GM10248 (cell line): ENCODE measurements at regions of chr2 and their contacts with region 1.

Region 1: GRCh38 chr2:47767880-47768609 is 14.9 kb upstream of the MSH6 start:
- DNase-seq: peak; percentile 79
- CTCF ChIP-seq: peak; percentile 98

Region 2: DNA sequence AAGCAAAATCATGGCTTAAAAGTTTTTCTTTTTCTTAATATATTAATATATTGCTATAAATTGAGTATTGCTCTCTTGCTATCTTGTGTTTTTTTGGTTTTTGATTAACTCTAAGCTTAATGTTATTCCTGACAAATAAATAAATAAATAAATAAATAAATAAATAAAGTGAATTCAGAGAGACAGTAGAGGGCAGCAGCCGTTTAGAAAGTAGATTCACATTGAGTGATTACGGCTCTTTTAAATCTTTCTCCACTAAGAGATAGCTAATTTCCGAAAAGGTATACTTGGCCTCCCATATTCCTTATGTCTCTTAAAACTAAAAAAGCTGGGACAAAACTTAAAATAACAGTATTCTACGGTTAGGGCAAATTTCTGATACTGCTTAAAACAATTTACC is 330.8 kb before region 1 on chr2:
- CTCF ChIA-PET with region 1: interaction called, 70 read pairs
- POLR2A ChIA-PET with region 1: no interaction called
- DNase-seq: peak; percentile 26
- CTCF ChIP-seq: peak; percentile 23

Region 3: DNA sequence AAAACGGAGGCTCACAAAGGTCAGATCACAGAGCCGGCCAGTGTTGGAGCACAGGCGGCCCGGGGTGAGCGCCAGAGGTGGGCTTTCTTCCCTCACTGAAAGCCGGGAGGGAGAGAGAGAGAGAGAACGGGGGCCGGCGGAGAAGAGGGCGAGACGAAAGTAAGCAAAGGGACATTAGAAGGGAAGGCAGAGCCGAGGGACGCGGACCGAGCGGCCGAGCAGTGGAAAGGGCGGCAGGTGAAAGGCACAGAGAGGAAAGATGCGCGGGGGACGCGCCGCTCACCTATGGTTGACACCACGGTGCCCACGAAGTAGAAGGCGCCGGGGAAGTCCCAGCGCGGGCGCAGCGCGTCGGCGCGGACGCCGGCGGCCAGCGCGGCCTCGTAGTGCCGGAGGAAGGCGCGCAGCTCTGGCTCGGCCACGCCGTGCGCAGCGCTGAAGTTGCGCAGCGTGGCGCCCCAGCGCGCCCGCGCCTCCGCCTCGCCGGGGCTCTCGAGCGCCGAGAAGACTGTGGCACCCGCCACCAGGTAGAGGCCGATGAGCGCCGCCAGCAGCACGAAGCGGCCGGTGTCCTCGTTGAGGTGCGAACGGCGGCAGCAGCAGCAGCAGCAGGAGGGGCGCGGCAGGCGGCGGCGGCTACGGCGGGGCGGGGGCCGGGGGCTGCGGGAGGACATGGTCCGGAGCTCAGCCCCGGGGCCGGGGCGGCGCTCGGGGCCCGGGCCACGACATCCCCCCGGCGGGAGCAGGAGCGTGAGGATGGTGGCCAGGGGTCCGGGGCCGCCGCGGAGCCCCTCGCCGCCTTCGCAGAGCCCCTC is 198.2 kb before region 1 on chr2:
- CTCF ChIA-PET with region 1: no interaction called
- POLR2A ChIA-PET with region 1: no interaction called
- DNase-seq: peak; percentile 29
- CTCF ChIP-seq: no peak

Region 4: GRCh38 chr2:47653902-47654789 is 113.9 kb before region 1 on chr2:
- CTCF ChIA-PET with region 1: interaction called, 16 read pairs
- POLR2A ChIA-PET with region 1: no interaction called
- DNase-seq: no peak
- CTCF ChIP-seq: peak; percentile 34

Region 5: DNA sequence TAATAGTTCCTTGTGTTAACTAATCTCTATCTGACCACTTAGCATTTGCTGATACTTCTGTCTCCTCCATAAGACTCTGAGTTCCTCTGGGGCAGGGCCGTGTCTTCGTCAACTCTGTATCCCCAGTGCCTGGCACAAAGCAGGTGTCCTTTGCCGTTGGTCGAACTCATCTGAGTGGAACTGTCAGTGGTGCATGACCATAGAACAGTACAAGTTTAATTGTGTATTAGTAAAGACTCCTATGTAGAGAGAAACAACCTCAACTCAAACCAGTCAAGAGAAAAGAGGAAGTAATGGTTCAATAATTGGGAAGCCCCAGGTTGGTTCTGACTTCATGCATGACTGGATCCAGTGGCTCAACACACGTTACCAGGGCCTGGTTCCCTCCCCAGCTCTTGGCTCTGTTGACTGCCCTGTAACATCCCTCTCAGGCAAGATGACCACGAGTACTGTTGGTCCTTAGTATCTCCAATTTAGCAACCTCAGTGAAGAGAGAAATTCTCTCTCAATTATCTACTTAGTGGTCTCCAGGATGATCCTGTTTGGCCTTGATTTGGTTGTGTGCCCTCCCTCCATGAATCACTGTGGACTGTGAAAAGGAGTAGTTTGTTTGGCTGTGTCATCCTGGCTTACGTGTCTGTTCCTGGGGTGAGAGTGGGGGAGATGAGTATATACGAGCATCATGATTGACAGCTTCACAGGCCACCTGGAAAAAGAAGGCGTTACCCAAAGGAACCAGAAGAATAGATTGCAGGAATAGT is 43.6 kb before region 1 on chr2:
- CTCF ChIA-PET with region 1: interaction called, 16 read pairs
- POLR2A ChIA-PET with region 1: no interaction called
- DNase-seq: peak; percentile 78
- CTCF ChIP-seq: no peak

Region 6: DNA sequence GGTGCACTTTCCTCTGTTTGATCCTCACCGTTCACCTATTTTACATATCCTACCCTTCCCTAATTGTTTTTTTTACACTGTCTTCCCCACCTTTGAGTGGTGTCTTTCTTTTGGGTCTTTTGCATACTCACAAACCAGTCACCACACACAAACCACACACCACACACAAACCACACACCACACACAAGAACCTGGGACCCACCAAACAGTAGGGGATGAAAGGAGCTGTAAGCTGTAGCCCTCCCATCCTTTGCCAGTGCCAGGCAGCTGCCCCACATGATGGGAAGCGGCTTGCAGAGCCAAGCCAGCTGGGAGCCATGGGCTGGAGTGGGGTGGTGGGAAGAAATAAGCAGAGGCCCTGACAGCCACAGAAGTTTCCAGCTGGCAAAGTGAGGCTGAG is 24.0 kb before region 1 on chr2:
- CTCF ChIA-PET with region 1: interaction called, 16 read pairs
- POLR2A ChIA-PET with region 1: no interaction called
- DNase-seq: no peak
- CTCF ChIP-seq: no peak

Region 7: DNA sequence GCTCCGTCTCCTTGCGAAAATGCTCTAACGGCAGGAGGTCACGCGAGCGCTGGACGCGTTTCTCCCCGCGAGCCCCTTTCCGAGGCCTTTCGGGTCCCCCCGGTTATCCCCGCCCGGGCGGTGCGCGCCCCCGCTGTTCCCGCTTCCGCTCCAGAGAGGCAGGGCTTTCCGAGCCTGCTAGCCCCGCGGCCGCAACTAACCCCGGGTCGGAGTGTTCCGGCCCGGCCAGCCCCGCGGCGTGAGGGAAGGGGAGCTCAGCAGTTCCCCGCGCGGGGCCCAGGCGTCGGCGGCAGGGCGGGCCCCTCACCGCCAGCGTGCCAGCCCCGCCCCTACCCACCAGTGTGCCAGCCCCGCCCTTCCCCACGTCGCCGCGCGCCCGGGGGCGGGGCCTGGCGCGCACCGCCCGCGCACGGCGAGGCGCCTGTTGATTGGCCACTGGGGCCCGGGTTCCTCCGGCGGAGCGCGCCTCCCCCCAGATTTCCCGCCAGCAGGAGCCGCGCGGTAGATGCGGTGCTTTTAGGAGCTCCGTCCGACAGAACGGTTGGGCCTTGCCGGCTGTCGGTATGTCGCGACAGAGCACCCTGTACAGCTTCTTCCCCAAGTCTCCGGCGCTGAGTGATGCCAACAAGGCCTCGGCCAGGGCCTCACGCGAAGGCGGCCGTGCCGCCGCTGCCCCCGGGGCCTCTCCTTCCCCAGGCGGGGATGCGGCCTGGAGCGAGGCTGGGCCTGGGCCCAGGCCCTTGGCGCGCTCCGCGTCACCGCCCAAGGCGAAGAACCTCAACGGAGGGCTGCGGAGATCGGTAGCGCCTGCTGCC is 14.8 kb after region 1 on chr2 and contains the start of gene MSH6:
- CTCF ChIA-PET with region 1: interaction called, 48 read pairs
- POLR2A ChIA-PET with region 1: no interaction called
- DNase-seq: peak; percentile 97
- CTCF ChIP-seq: no peak